ENCODE measurements at regions of chr1 and their contacts with region 1.

Region 1: DNA sequence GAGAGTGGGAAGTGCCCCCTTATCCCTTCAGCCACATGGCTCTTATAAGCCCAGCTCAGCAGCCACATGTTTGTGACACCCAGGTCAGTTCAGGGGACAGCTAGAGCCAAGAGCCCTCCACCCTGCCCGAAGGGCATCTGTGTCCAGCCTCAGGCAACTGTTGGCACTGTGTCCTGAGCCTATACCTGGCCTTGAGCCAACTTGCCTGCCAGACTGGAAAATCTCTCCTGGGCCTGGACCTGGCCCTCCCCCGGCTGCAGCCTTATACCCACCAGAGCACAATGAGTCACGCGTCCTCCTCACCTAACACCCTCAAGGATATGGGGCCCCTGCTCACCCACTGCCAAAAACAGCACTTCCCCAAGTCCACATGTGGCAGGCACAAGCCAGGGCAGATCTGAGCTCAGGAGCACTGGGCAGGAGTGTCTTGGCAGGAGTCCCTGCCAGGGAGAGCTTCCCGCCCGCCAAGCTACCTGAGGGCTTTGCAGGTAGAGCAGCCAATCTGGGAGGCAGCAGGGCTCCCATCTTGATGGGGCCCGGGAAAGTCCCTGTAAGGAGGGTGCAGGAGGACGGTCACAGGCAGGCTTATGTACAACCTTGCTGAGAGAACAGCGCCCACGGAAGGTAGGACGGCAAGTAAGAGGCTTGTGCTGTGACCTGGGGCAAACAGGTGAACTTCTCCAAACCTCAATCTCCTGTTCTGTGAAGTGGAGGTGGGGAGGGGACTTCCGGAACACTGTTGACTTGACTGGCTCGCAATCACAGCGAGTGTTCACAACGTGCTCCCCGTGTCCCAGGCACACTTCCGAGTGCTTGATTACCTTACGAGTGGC is 19.8 kb upstream of the HSPG2 start:
- DNase-seq: peak; percentile 89 to 97
- H3K4me3 ChIP-seq: no peak overlapping the region
- H3K27ac ChIP-seq: peak overlapping the region; percentile 3; the same call in 1 of the 2 replicates
- H3K4me1 ChIP-seq: peaks cover 29% of the 10 kb centered on the region
- H3K27me3 ChIP-seq: no peaks in the 10 kb centered on the region
- CTCF ChIP-seq: no peak

Region 2: DNA sequence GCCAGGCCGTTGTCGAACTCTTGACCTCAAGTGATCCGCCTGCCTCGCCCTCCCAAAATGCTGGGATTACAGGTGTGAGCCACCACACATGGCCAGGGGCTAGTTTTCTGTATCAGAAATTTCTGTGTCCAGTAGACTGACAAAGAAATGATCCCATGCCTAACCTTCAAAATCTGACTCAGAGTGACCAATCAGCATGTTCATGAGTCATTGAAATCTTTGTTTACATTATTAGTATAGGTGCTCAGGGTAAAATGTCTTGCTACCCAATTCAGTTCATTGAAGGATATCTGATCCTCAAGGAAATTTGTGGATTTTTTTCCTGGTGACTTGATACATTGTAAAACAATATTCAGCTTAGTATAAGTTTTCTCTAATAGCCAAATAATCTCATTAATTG is 155.8 kb before region 1 on chr1:
- CTCF ChIA-PET with region 1: no interaction called
- POLR2A ChIA-PET with region 1: no interaction called
- intact Hi-C with region 1: no loop called
- DNase-seq: peak in 1 of 2 experiments; percentile 83
- H3K4me3 ChIP-seq: no peak overlapping the region
- H3K27ac ChIP-seq: peak overlapping the region; percentile 50
- H3K4me1 ChIP-seq: peaks cover 7% of the 10 kb centered on the region; the same call in 1 of the 2 replicates
- H3K27me3 ChIP-seq: no peaks in the 10 kb centered on the region
- CTCF ChIP-seq: no peak

Region 3: GRCh38 chr1:21861602-21862429 is 95.1 kb before region 1 on chr1:
- CTCF ChIA-PET with region 1: no interaction called
- POLR2A ChIA-PET with region 1: interaction called, 26 read pairs
- intact Hi-C with region 1: no loop called
- DNase-seq: peak; percentile 61 to 83
- H3K4me3 ChIP-seq: no peak overlapping the region
- H3K27ac ChIP-seq: peak overlapping the region; percentile 46; the same call in 1 of the 2 replicates
- H3K4me1 ChIP-seq: peaks cover 11% of the 10 kb centered on the region
- H3K27me3 ChIP-seq: no peaks in the 10 kb centered on the region
- CTCF ChIP-seq: no peak

Region 4: GRCh38 chr1:21896652-21897532 is 60.0 kb before region 1 on chr1:
- CTCF ChIA-PET with region 1: no interaction called
- POLR2A ChIA-PET with region 1: no interaction called
- intact Hi-C with region 1: loop called (anchors 2 kb)
- DNase-seq: peak in 1 of 2 experiments; percentile 72
- H3K4me3 ChIP-seq: no peak overlapping the region
- H3K27ac ChIP-seq: no peak overlapping the region
- H3K4me1 ChIP-seq: no peaks in the 10 kb centered on the region
- H3K27me3 ChIP-seq: no peaks in the 10 kb centered on the region
- CTCF ChIP-seq: no peak

Region 5: GRCh38 chr1:21919520-21919919 is 37.4 kb before region 1 on chr1:
- CTCF ChIA-PET with region 1: no interaction called
- POLR2A ChIA-PET with region 1: interaction called, 23 read pairs
- intact Hi-C with region 1: no loop called
- DNase-seq: no peak
- H3K4me3 ChIP-seq: no peak overlapping the region
- H3K27ac ChIP-seq: no peak overlapping the region
- H3K4me1 ChIP-seq: no peaks in the 10 kb centered on the region
- H3K27me3 ChIP-seq: no peaks in the 10 kb centered on the region
- CTCF ChIP-seq: no peak

Region 6: DNA sequence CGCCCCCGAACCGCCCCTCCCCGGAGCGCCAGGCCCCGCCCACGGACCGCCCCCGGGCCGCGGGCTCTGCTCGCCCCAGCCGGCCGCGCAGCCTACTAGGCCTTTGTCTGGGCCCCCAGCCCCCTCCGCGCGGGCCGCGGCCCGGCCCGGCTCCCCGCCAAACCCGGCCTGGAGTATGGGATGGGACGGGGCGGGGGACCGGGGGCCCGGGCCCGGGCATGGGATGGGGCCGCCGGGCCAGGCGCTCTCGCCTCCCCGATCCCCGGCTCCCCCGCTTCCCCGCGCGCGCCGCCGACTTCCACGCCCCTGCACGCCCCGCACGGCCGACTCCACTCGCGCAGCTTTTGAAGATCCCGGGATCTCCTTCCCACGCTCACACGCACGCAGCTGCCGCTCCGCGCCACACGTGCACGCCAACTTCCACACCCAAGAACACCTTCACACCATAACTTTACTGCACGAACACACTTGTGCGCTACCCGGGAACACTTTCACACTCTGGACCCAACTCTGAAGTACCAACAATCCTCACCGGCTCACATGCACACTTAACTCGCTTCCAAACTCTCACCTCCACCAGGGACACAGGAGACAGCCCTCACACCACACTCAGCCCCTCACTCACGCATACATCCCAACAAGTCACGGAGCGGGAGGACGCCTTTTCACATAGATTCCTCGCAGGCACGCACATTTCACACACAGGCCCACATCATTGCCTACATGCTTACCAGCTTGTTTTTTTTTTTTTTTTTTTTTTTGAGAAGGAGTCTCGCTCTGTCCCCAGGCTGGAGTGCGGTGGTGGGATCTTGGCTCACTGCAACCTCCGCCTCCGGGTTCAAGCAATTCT is 19.3 kb before region 1 on chr1:
- CTCF ChIA-PET with region 1: interaction called, 3 read pairs
- POLR2A ChIA-PET with region 1: interaction called, 6 read pairs
- intact Hi-C with region 1: loop called (anchors 1 kb)
- DNase-seq: peak in 1 of 2 experiments; percentile 74
- H3K4me3 ChIP-seq: peak overlapping the region; percentile 46; the same call in 1 of the 2 replicates
- H3K27ac ChIP-seq: no peak overlapping the region
- H3K4me1 ChIP-seq: peaks cover 44% of the 10 kb centered on the region
- H3K27me3 ChIP-seq: no peaks in the 10 kb centered on the region
- CTCF ChIP-seq: no peak